CD4-positive, alpha-beta T cell (primary cell): ENCODE measurements at regions of chr3 and their contacts with region 1.

Region 1: GRCh38 chr3:7421065-7421464 is 560.1 kb downstream of the GRM7 start:
- DNase-seq: no peak
- ATAC-seq: no peak
- H3K4me3 ChIP-seq: no peak overlapping the region
- H3K4me3 Mint-ChIP-seq: no peak overlapping the region
- H3K27ac ChIP-seq: no peak overlapping the region
- H3K27ac Mint-ChIP-seq: no peak overlapping the region
- H3K4me1 ChIP-seq: no peaks in the 10 kb centered on the region
- H3K4me1 Mint-ChIP-seq: no peaks in the 10 kb centered on the region
- H3K27me3 ChIP-seq: no peaks in the 10 kb centered on the region
- H3K27me3 Mint-ChIP-seq: no peaks in the 10 kb centered on the region
- CTCF ChIP-seq: no peak

Region 2: DNA sequence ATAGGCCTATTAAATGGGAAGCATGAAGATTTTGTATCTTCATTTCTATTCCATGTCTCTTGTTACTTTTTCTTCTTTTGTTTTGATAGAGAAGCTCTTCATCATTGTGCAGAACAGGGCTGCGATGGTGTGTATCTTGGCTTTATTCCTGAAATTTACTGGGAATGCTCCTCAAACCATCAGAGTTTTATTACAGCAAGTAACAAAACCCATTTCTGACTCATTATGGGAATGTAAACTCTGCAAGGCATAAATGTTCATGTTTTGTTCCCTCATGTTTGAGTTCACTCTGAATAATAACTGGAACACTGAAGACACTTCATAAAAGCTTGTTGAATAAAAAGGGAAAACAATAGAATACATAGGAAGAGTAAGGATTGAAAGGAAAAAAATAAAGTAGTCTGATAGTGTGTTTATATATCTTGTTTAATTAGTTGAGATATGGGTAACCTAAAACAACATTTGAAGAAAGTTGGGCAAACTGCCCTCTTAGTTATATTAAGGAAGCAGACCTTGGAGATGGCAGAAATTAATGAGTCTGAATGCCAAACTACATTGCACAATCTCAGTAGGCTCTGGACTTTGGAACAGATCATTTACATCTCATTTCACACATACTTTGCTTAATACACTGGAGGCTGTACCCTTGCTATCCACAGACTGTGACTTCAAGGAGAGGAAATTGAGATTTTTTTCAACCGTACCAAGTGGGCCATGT is 38.6 kb before region 1 on chr3:
- CTCF ChIA-PET with region 1: no interaction called
- POLR2A ChIA-PET with region 1: no interaction called
- intact Hi-C with region 1: no loop called
- DNase-seq: no peak
- ATAC-seq: no peak
- H3K4me3 ChIP-seq: no peak overlapping the region
- H3K4me3 Mint-ChIP-seq: no peak overlapping the region
- H3K27ac ChIP-seq: no peak overlapping the region
- H3K27ac Mint-ChIP-seq: no peak overlapping the region
- H3K4me1 ChIP-seq: no peaks in the 10 kb centered on the region
- H3K4me1 Mint-ChIP-seq: no peaks in the 10 kb centered on the region
- H3K27me3 ChIP-seq: no peaks in the 10 kb centered on the region
- H3K27me3 Mint-ChIP-seq: no peaks in the 10 kb centered on the region
- CTCF ChIP-seq: no peak

Region 3: GRCh38 chr3:7396534-7396933 is 24.5 kb before region 1 on chr3:
- CTCF ChIA-PET with region 1: no interaction called
- POLR2A ChIA-PET with region 1: no interaction called
- intact Hi-C with region 1: loop called in 1 of 2 experiments (anchors 1 kb)
- DNase-seq: no peak
- ATAC-seq: no peak
- H3K4me3 ChIP-seq: no peak overlapping the region
- H3K4me3 Mint-ChIP-seq: no peak overlapping the region
- H3K27ac ChIP-seq: no peak overlapping the region
- H3K27ac Mint-ChIP-seq: no peak overlapping the region
- H3K4me1 ChIP-seq: no peaks in the 10 kb centered on the region
- H3K4me1 Mint-ChIP-seq: no peaks in the 10 kb centered on the region
- H3K27me3 ChIP-seq: no peaks in the 10 kb centered on the region
- H3K27me3 Mint-ChIP-seq: no peaks in the 10 kb centered on the region
- CTCF ChIP-seq: no peak

Region 4: DNA sequence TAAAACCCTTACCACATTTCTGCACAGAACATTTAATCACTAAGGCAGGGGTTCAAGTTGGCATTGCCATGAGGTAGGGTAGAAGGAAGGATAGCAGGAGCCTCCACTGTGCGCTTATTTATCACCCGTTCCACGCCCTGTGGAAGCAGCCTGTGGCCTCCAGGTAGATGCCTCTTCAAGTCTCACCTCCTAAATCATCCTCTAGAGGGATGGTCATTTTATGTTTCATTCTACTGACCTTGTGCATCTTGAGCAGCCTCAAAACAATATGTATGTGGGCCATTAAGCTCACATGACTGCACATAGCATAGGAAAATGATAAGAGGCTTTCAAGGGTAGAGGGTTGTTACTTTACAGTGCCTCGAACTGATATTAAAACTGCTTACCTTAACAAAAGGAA is 14.0 kb before region 1 on chr3:
- CTCF ChIA-PET with region 1: no interaction called
- POLR2A ChIA-PET with region 1: no interaction called
- intact Hi-C with region 1: no loop called
- DNase-seq: no peak
- ATAC-seq: no peak
- H3K4me3 ChIP-seq: no peak overlapping the region
- H3K4me3 Mint-ChIP-seq: no peak overlapping the region
- H3K27ac ChIP-seq: no peak overlapping the region
- H3K27ac Mint-ChIP-seq: no peak overlapping the region
- H3K4me1 ChIP-seq: no peaks in the 10 kb centered on the region
- H3K4me1 Mint-ChIP-seq: no peaks in the 10 kb centered on the region
- H3K27me3 ChIP-seq: no peaks in the 10 kb centered on the region
- H3K27me3 Mint-ChIP-seq: no peaks in the 10 kb centered on the region
- CTCF ChIP-seq: no peak